A673 (cell line): ENCODE measurements at regions of chr11 and their contacts with region 1.

Region 1: DNA sequence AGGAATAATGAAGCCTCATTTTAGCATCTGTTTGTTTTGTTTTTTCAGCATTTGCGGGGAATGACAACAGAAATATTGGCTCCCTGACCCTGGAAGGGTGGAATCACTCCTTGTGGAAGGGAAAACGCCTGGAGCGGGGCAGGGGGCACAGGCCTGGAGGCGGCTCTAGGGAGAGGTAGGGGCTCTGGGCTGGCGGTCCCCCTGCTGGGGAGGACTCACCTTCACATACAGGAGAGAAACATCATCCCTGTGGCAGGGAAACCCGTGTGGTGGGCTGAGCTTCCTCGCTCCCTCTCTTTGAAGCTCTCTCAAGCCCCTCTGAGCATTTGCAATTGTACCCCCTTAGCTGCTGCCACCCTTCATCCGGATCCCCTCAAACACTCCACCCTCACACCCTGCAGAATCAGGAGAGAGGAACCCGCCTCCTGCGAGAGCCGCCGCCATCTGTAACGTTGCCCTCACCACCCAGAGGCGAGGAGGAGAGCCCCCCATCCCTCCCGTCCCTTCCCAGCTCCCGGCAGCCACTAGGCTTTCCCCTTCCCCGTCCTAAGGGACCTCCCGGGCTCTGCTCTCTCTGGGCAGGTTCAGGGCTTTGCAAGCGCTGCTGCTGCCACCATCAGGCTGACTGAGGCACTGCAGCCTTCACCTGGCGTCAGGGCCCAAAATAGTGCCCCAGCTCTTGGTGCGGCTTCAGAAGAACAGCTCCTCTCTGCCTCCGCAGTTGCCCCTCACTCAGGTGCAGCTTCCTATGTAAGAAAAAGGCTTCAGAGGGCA is 10.4 kb downstream of the KIRREL3 start:
- DNase-seq: peak; percentile 83
- H3K4me3 ChIP-seq: no peak overlapping the region
- H3K27ac ChIP-seq: no peak overlapping the region
- H3K4me1 ChIP-seq: no peaks in the 10 kb centered on the region
- H3K27me3 ChIP-seq: peaks cover 16% of the 10 kb centered on the region
- CTCF ChIP-seq: peak; percentile 99

Region 2: GRCh38 chr11:126573325-126574076 is 416.6 kb before region 1 on chr11:
- CTCF ChIA-PET with region 1: interaction called, 9 read pairs
- POLR2A ChIA-PET with region 1: no interaction called
- intact Hi-C with region 1: loop called (anchors 10 kb)
- DNase-seq: peak; percentile 30
- H3K4me3 ChIP-seq: no peak overlapping the region
- H3K27ac ChIP-seq: no peak overlapping the region
- H3K4me1 ChIP-seq: no peaks in the 10 kb centered on the region
- H3K27me3 ChIP-seq: peaks cover 16% of the 10 kb centered on the region
- CTCF ChIP-seq: peak; percentile 60

Region 3: GRCh38 chr11:126716456-126717083 is 273.6 kb before region 1 on chr11:
- CTCF ChIA-PET with region 1: interaction called, 3 read pairs
- POLR2A ChIA-PET with region 1: no interaction called
- intact Hi-C with region 1: loop called (anchors 1 kb)
- DNase-seq: peak; percentile 64
- H3K4me3 ChIP-seq: no peak overlapping the region
- H3K27ac ChIP-seq: no peak overlapping the region
- H3K4me1 ChIP-seq: no peaks in the 10 kb centered on the region
- H3K27me3 ChIP-seq: peaks cover 3% of the 10 kb centered on the region
- CTCF ChIP-seq: peak; percentile 79

Region 4: GRCh38 chr11:126824035-126824607 is 166.0 kb before region 1 on chr11:
- CTCF ChIA-PET with region 1: no interaction called
- POLR2A ChIA-PET with region 1: no interaction called
- intact Hi-C with region 1: no loop called
- DNase-seq: no peak
- H3K4me3 ChIP-seq: no peak overlapping the region
- H3K27ac ChIP-seq: no peak overlapping the region
- H3K4me1 ChIP-seq: no peaks in the 10 kb centered on the region
- H3K27me3 ChIP-seq: peaks cover 46% of the 10 kb centered on the region
- CTCF ChIP-seq: no peak

Region 5: GRCh38 chr11:126841999-126842398 is 148.1 kb before region 1 on chr11:
- CTCF ChIA-PET with region 1: no interaction called
- POLR2A ChIA-PET with region 1: no interaction called
- intact Hi-C with region 1: no loop called
- DNase-seq: no peak
- H3K4me3 ChIP-seq: no peak overlapping the region
- H3K27ac ChIP-seq: no peak overlapping the region
- H3K4me1 ChIP-seq: no peaks in the 10 kb centered on the region
- H3K27me3 ChIP-seq: peaks cover 37% of the 10 kb centered on the region
- CTCF ChIP-seq: no peak

Region 6: DNA sequence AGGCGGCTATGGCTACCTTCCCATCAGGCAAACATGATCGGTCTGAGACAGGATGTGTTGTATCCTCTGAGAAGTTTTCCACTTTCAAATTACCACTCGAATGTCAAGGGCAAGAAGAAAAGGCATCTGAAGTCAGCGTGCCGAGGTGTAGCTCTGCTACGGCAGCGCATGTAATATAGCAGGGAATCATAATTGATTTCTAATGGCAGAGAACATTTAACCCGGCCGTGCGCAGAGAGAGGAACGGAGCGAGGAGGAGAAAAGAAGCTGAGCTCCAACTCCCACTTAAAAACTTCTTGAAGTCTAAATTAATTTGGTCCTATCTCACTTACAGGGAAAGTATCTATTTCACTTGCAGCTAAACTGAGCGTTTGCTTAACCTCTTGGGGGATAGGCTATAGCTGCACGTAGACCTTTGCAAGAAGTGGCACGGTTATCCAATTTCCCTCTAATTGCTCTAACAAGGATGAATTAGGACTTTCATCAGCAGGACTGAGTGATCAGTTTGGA is 147.7 kb after region 1 on chr11:
- CTCF ChIA-PET with region 1: no interaction called
- POLR2A ChIA-PET with region 1: no interaction called
- intact Hi-C with region 1: no loop called
- DNase-seq: no peak
- H3K4me3 ChIP-seq: no peak overlapping the region
- H3K27ac ChIP-seq: no peak overlapping the region
- H3K4me1 ChIP-seq: no peaks in the 10 kb centered on the region
- H3K27me3 ChIP-seq: peaks cover 59% of the 10 kb centered on the region
- CTCF ChIP-seq: no peak

Region 7: GRCh38 chr11:127993788-127994187 is 1003.7 kb after region 1 on chr11:
- CTCF ChIA-PET with region 1: no interaction called
- POLR2A ChIA-PET with region 1: no interaction called
- intact Hi-C with region 1: no loop called
- DNase-seq: peak; percentile 7
- H3K4me3 ChIP-seq: no peak overlapping the region
- H3K27ac ChIP-seq: no peak overlapping the region
- H3K4me1 ChIP-seq: no peaks in the 10 kb centered on the region
- H3K27me3 ChIP-seq: peaks cover 59% of the 10 kb centered on the region
- CTCF ChIP-seq: peak; percentile 44